Heart left ventricle (tissue), 16 donors: ENCODE measurements at regions of chr22 and their contacts with region 1.

Region 1: DNA sequence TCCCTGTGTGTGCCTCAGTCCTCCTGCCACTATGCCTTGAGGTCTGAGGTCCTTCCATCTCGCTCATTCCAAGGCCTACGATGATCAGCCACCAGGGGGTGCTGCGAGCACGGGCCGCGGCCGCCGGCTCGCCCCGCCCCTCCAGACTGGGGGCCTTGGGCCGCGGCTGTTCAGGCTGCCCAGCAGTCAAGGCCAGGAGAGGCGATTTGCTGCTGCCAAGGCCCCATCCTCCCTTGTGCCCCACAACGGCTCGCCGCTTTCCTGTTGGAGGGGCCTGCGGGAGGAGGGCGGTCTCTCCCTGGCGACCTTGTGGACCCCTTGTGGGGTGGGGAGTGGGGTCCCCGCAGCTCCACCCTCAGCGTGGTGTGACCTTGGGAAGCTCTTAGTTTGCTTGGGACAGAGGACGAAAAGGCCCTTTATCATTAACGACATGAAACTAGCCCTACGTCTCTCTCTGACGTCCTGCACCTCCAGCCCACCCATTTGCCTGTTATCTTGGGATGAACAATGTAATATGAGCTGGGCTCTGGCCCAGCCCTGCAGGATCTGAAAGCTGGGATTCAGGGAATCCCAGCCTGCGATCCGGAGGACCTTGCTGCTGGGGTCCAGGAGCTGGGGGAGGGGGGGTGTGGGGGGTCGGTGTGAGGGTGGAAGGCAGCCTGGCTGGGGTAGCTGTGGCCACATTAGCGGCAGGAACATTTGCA is 5.3 kb upstream of the GALR3 start:
- DNase-seq: peak; percentile 80 to 91 (median 86)
- ATAC-seq: peak; percentile 89 to 94 (median 92)
- H3K4me3 ChIP-seq: peak overlapping the region in 10 of 12 donors; percentile 23 to 62 (median 49)
- H3K27ac ChIP-seq: peak overlapping the region in 10 of 12 donors; percentile 13 to 84 (median 64)
- H3K4me1 ChIP-seq: peaks cover 2 to 20% (median 18%) of the 10 kb centered on the region in 12 donors
- H3K27me3 ChIP-seq: peaks cover 0 to 18% (median 5%) of the 10 kb centered on the region in 9 donors
- CTCF ChIP-seq: peak; percentile 92 to 99 (median 97)
- POLR2A ChIP-seq: no peak

Region 2: DNA sequence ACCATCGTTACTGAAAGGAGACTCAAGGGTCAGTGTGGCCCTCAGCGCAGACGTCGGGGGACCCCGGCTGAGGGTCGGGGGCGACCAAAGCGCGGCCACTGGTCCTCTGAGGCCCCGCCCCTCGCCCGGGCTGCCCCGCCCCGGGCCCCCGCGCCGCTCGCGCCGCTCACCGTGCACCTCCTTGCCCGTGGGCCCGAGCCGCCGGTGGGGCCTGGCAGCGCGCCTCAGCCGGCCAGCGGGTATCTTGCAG is 25.8 kb after region 1 on chr22:
- intact Hi-C with region 1: no loop called
- DNase-seq: peak in 2 of 5 donors; percentile 59 to 64
- ATAC-seq: peak in 2 of 4 donors; percentile 66 to 70
- H3K4me3 ChIP-seq: peak overlapping the region; percentile 64 to 98 (median 83)
- H3K27ac ChIP-seq: peak overlapping the region; percentile 52 to 96 (median 89)
- H3K4me1 ChIP-seq: peaks cover 3 to 32% (median 19%) of the 10 kb centered on the region in 12 donors
- H3K27me3 ChIP-seq: no peaks in the 10 kb centered on the region
- CTCF ChIP-seq: no peak
- POLR2A ChIP-seq: no peak

Region 3: DNA sequence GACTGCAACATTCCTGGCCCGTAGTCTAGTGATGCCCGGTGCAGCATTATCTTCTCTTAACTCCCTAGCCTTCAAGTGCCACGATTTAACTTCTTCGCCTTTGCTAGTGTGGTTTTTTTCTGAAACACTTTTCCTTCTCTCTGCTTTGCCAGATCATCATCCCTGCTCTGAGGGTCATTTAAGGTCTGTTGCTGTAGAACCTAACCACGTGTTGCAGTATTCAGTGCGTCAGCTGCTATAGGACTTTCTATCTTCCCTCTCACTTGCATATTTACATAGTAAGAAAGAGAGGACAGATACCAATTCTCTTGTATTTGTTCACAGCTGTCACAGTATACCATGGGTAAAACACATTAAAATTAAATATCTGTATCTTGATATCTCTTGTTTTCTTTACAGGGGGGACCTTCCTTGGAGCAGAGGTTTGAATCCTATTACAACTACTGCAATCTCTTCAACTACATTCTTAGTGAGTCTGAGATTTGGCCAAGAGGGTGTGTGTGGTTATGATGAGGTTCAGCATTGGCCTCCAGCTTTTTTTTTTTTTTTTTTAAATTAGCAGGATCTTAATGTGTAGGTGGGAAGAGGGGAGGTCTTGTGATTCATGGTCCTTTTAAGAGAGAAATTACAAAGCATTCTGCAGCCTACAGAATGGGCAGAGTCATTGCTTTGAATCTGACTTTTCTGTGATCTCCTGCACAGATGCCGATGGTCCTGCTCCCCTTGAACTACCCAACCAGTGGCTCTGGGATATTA is 44.9 kb after region 1 on chr22:
- intact Hi-C with region 1: loop called (anchors 1 to 2 kb)
- DNase-seq: no peak
- ATAC-seq: peak; percentile 28 to 55 (median 41)
- H3K4me3 ChIP-seq: no peak overlapping the region
- H3K27ac ChIP-seq: peak overlapping the region in 11 of 12 donors; percentile 11 to 60 (median 42)
- H3K4me1 ChIP-seq: peaks cover 3 to 49% (median 14%) of the 10 kb centered on the region in 12 donors
- H3K27me3 ChIP-seq: no peaks in the 10 kb centered on the region
- CTCF ChIP-seq: no peak
- POLR2A ChIP-seq: no peak

Region 4: DNA sequence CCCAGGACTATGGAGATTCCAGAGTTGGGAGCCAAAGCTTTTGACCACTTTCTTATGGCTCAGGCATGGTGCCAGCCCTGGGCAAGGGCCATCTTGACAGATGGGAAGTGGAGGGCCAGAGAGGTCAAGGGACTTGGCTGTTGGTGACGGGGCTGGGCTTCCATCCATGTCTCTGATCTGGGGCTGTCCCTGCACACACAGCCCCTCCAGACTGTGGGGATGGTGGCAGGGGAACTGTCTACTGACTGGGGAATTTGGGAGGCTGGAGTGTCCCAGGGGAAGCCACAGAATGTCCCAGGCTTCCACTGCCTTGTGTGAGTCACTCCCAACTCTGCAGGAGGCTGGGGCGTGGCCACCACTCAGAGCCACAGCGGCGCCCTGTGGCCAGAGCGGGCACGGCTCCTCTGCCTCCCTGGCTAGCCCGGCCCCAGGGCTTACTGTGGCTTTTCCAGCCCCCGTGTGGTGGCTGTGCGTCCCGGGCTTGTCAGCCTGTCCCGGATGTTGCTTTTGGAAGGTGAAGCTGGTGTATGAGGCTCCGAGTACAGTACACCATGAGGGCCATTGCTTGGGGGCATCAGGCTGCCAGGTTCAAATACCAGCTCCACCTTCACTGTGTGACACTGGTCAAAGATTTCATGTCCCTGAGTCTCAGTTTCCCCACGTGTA is 116.0 kb after region 1 on chr22:
- intact Hi-C with region 1: loop called in 1 of 10 experiments (anchors 10 kb)
- DNase-seq: peak; percentile 87 to 94 (median 92)
- ATAC-seq: peak; percentile 93 to 98 (median 96)
- H3K4me3 ChIP-seq: no peak overlapping the region
- H3K27ac ChIP-seq: peak overlapping the region in 11 of 12 donors; percentile 16 to 80 (median 60)
- H3K4me1 ChIP-seq: peaks cover 6 to 40% (median 14%) of the 10 kb centered on the region in 12 donors
- H3K27me3 ChIP-seq: no peaks in the 10 kb centered on the region
- CTCF ChIP-seq: peak; percentile 88 to 99 (median 95)
- POLR2A ChIP-seq: no peak

Region 5: DNA sequence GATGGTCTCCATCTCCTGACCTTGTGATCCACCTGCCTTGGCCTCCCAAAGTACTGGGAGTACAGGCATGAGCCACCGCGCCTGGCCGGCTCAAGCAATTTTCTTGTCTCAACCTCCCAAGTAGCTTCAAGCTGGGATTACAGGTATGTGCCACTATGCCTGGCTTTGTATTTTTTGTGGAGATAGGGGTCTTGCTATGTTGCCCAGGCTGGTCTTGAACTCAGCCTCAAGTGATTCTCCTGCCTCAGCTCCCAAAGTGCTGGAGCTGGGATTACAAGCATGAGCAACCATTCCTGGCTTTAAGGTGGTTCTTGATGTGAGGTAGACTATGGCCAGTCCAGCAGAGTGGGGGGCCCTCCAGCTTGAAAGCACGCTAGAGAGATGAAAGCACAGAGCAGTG is 143.2 kb after region 1 on chr22:
- intact Hi-C with region 1: loop called (anchors 1 to 10 kb)
- DNase-seq: no peak
- ATAC-seq: no peak
- H3K4me3 ChIP-seq: no peak overlapping the region
- H3K27ac ChIP-seq: no peak overlapping the region
- H3K4me1 ChIP-seq: peaks cover 0 to 16% (median 8%) of the 10 kb centered on the region in 12 donors
- H3K27me3 ChIP-seq: no peaks in the 10 kb centered on the region
- CTCF ChIP-seq: no peak
- POLR2A ChIP-seq: no peak

Region 6: GRCh38 chr22:37965940-37966664 is 148.2 kb after region 1 on chr22:
- intact Hi-C with region 1: loop called (anchors 1 to 10 kb)
- DNase-seq: no peak
- ATAC-seq: peak; percentile 28 to 77 (median 43)
- H3K4me3 ChIP-seq: no peak overlapping the region
- H3K27ac ChIP-seq: peak overlapping the region in 8 of 12 donors; percentile 8 to 63 (median 30)
- H3K4me1 ChIP-seq: peaks cover 0 to 22% (median 11%) of the 10 kb centered on the region in 12 donors
- H3K27me3 ChIP-seq: no peaks in the 10 kb centered on the region
- CTCF ChIP-seq: no peak
- POLR2A ChIP-seq: no peak

Region 7: GRCh38 chr22:38097557-38098409 is 279.9 kb after region 1 on chr22:
- intact Hi-C with region 1: no loop called
- DNase-seq: peak in 1 of 5 donors; percentile 24
- ATAC-seq: peak in 3 of 4 donors; percentile 22 to 33 (median 22)
- H3K4me3 ChIP-seq: no peak overlapping the region
- H3K27ac ChIP-seq: no peak overlapping the region
- H3K4me1 ChIP-seq: peaks cover 0 to 13% (median 2%) of the 10 kb centered on the region in 12 donors
- H3K27me3 ChIP-seq: no peaks in the 10 kb centered on the region
- CTCF ChIP-seq: peak in 7 of 12 donors; percentile 15 to 37 (median 22)
- POLR2A ChIP-seq: no peak